ENCODE measurements at regions of chr2 and their contacts with region 1.

Region 1: GRCh38 chr2:181715033-181715630 is 34.8 kb upstream of the NEUROD1 start:
- DNase-seq: peak; percentile 56
- ATAC-seq: peak; percentile 93
- H3K4me3 ChIP-seq: no peak overlapping the region
- H3K27ac ChIP-seq: no peak overlapping the region
- H3K4me1 ChIP-seq: no peaks in the 10 kb centered on the region
- H3K27me3 ChIP-seq: no peaks in the 10 kb centered on the region
- CTCF ChIP-seq: peak; percentile 55 to 85 (median 70)
- EP300 ChIP-seq: no peak
- POLR2A ChIP-seq: no peak
- RAD21 ChIP-seq: peak; percentile 96

Region 2: GRCh38 chr2:181104512-181105115 is 610.5 kb before region 1 on chr2:
- CTCF ChIA-PET with region 1: interaction called, 94 read pairs
- POLR2A ChIA-PET with region 1: no interaction called
- RAD21 ChIA-PET with region 1: interaction called, 65 read pairs
- SMC1A ChIA-PET with region 1: interaction called, 73 read pairs
- in situ Hi-C with region 1: no loop called
- intact Hi-C with region 1: loop called (anchors 1 kb)
- DNase-seq: no peak
- ATAC-seq: no peak; the same call in 2 of the 3 replicates
- H3K4me3 ChIP-seq: no peak overlapping the region
- H3K27ac ChIP-seq: peak overlapping the region; percentile 4; the same call in 1 of the 2 replicates
- H3K4me1 ChIP-seq: peaks cover 25% of the 10 kb centered on the region
- H3K27me3 ChIP-seq: no peaks in the 10 kb centered on the region
- CTCF ChIP-seq: peak; percentile 63 to 67 (median 65)
- EP300 ChIP-seq: no peak
- POLR2A ChIP-seq: no peak
- RAD21 ChIP-seq: peak; percentile 100

Region 3: DNA sequence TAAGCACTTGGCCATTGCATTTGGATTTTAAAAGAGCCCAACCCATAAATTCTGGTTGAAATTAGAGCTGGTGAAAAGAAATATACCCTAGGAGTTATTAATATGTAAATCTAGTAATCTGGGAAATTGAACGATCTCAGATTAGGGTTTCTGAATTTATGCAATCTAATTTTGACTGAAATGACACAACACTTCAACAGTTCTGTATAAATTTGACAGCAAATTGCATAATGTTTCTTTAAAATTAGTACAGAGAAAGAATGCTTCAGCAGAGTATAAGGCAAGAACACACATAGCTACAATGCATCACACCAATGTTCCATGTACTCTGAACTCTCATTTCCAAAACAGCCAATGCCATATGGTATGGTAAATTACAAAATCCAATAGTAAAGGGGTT is 459.5 kb before region 1 on chr2:
- CTCF ChIA-PET with region 1: no interaction called
- POLR2A ChIA-PET with region 1: no interaction called
- RAD21 ChIA-PET with region 1: no interaction called
- SMC1A ChIA-PET with region 1: no interaction called
- in situ Hi-C with region 1: no loop called
- intact Hi-C with region 1: no loop called
- DNase-seq: no peak
- ATAC-seq: no peak
- H3K4me3 ChIP-seq: no peak overlapping the region
- H3K27ac ChIP-seq: no peak overlapping the region
- H3K4me1 ChIP-seq: peaks cover 9% of the 10 kb centered on the region
- H3K27me3 ChIP-seq: no peaks in the 10 kb centered on the region
- CTCF ChIP-seq: no peak
- EP300 ChIP-seq: no peak
- POLR2A ChIP-seq: no peak
- RAD21 ChIP-seq: no peak

Region 4: GRCh38 chr2:181438261-181438660 is 276.9 kb before region 1 on chr2:
- CTCF ChIA-PET with region 1: interaction called, 4 read pairs
- POLR2A ChIA-PET with region 1: no interaction called
- RAD21 ChIA-PET with region 1: no interaction called
- SMC1A ChIA-PET with region 1: interaction called, 5 read pairs
- in situ Hi-C with region 1: no loop called
- intact Hi-C with region 1: loop called (anchors 2 kb)
- DNase-seq: no peak
- ATAC-seq: peak; percentile 58
- H3K4me3 ChIP-seq: no peak overlapping the region
- H3K27ac ChIP-seq: no peak overlapping the region
- H3K4me1 ChIP-seq: no peaks in the 10 kb centered on the region
- H3K27me3 ChIP-seq: no peaks in the 10 kb centered on the region
- CTCF ChIP-seq: peak; percentile 20 to 34 (median 24); a peak in 4 of 6 replicates
- EP300 ChIP-seq: no peak
- POLR2A ChIP-seq: no peak
- RAD21 ChIP-seq: 0 out of 2 replicates have a peak, but pooled peaks have one; percentile 22

Region 5: DNA sequence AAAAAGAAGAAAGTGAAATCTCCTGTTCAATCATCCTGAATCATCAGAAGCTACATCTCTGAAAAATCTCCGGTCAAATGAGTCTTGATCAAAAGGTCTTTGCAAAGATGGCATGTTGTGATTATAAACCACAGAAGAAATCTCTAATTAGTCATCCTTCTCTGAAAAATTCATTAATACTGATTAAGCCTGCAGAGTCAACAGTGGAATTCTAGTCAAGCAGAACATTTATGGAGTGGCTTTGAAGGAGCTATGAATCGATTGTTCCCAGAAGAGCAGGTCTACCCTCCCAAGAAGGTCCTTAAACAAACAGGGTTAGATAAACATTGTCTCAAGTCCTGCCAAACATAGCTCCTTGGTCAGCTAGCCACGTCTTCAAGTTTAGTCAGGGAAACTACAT is 169.1 kb before region 1 on chr2:
- CTCF ChIA-PET with region 1: interaction called, 6 read pairs
- POLR2A ChIA-PET with region 1: no interaction called
- RAD21 ChIA-PET with region 1: no interaction called
- SMC1A ChIA-PET with region 1: interaction called, 10 read pairs
- in situ Hi-C with region 1: no loop called
- intact Hi-C with region 1: no loop called
- DNase-seq: no peak
- ATAC-seq: no peak
- H3K4me3 ChIP-seq: no peak overlapping the region
- H3K27ac ChIP-seq: no peak overlapping the region
- H3K4me1 ChIP-seq: no peaks in the 10 kb centered on the region
- H3K27me3 ChIP-seq: no peaks in the 10 kb centered on the region
- CTCF ChIP-seq: no peak
- EP300 ChIP-seq: no peak
- POLR2A ChIP-seq: no peak
- RAD21 ChIP-seq: no peak

Region 6: GRCh38 chr2:181586569-181587081 is 128.5 kb before region 1 on chr2:
- CTCF ChIA-PET with region 1: interaction called, 27 read pairs
- POLR2A ChIA-PET with region 1: no interaction called
- RAD21 ChIA-PET with region 1: interaction called, 36 read pairs
- SMC1A ChIA-PET with region 1: interaction called, 21 read pairs
- in situ Hi-C with region 1: no loop called
- intact Hi-C with region 1: no loop called
- DNase-seq: peak; percentile 81
- ATAC-seq: peak; percentile 96
- H3K4me3 ChIP-seq: no peak overlapping the region
- H3K27ac ChIP-seq: peak overlapping the region; percentile 12; the same call in 1 of the 2 replicates
- H3K4me1 ChIP-seq: peaks cover 11% of the 10 kb centered on the region
- H3K27me3 ChIP-seq: no peaks in the 10 kb centered on the region
- CTCF ChIP-seq: no peak
- EP300 ChIP-seq: peak; percentile 45 to 68; a peak in 3 of 4 replicates
- POLR2A ChIP-seq: no peak
- RAD21 ChIP-seq: no peak

Region 7: GRCh38 chr2:181742922-181743722 is 28.0 kb after region 1 on chr2:
- CTCF ChIA-PET with region 1: interaction called, 23 read pairs
- POLR2A ChIA-PET with region 1: no interaction called
- RAD21 ChIA-PET with region 1: interaction called, 12 read pairs
- SMC1A ChIA-PET with region 1: interaction called, 13 read pairs
- in situ Hi-C with region 1: no loop called
- intact Hi-C with region 1: no loop called
- DNase-seq: peak; percentile 17
- ATAC-seq: peak; percentile 58
- H3K4me3 ChIP-seq: no peak overlapping the region
- H3K27ac ChIP-seq: no peak overlapping the region
- H3K4me1 ChIP-seq: no peaks in the 10 kb centered on the region
- H3K27me3 ChIP-seq: no peaks in the 10 kb centered on the region
- CTCF ChIP-seq: peak; percentile 47 to 72 (median 53); a peak in 5 of 6 replicates
- EP300 ChIP-seq: no peak
- POLR2A ChIP-seq: no peak
- RAD21 ChIP-seq: peak; percentile 83